Activated T-helper 2 cell treated with anti-CD3 and anti-CD28 coated beads, Interferon-gamma antibody, Interleukin-2, Interleukin-4, amounts not matched to agents 10 μg/mL and 5 μg/mL and 100 μg/mL, durations not matched to agents 14 hours and 24 hours and 36 hours (primary cell): ENCODE measurements at regions of chrX and their contacts with region 1.

Region 1: DNA sequence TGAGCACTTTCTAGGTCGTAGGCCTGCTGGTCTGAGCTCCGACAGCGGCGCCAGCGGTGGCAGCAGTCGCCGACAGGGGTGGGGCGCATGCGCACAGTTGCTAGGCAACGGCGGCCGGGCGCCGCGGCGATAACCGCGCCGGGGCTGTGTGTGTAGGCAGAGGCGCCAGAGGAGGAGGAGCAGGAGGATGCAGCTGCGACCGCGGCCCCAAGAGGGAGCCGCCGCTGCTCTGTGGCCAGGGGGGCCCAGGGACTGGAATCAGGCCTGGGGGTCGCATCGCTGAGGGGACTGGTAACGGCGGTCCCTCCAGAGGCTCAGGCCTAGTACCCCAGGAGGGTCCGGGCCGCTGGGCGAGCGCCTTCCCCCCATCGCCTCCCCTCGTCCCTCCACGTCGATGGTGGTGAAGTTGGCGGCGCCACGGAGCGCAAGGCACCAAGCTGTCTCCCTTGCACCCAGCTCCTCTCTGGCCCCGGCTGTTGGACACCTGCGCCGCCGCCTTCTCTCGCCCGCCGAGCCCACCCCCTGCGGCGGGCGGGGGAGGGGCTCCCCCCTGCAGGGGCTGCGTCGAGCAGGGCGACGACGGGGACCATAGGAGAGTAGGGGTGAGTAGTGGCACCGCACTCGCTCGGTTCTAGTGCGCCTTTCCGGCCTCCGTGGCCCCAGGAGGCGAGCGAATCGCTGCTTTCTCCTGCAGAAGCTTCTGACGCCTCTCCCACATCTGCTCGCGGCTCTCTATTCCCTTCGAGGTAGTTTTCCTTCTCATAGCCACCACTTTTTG is 58.6 kb upstream of the ZC4H2 start:
- DNase-seq: peak; percentile 77
- H3K4me3 Mint-ChIP-seq: peak within 1 kb of the TSS; percentile 91
- H3K27ac Mint-ChIP-seq: peak within 1 kb of the TSS; percentile 85
- H3K4me1 Mint-ChIP-seq: peaks cover 15% of the 10 kb centered on the region
- H3K27me3 Mint-ChIP-seq: no peaks in the 10 kb centered on the region

Region 2: GRCh38 chrX:63350941-63351616 is 1683.8 kb before region 1 on chrX and contains the start of gene SPIN4:
- intact Hi-C with region 1: loop called (anchors 10 kb)
- DNase-seq: peak; percentile 66
- H3K4me3 Mint-ChIP-seq: peak within 1 kb of the TSS; percentile 92
- H3K27ac Mint-ChIP-seq: peak within 1 kb of the TSS; percentile 85
- H3K4me1 Mint-ChIP-seq: peaks cover 30% of the 10 kb centered on the region
- H3K27me3 Mint-ChIP-seq: no peaks in the 10 kb centered on the region
- total RNA-seq, gene SPIN4: 7.5 and 8.2 TPM in 2 replicates

Region 3: DNA sequence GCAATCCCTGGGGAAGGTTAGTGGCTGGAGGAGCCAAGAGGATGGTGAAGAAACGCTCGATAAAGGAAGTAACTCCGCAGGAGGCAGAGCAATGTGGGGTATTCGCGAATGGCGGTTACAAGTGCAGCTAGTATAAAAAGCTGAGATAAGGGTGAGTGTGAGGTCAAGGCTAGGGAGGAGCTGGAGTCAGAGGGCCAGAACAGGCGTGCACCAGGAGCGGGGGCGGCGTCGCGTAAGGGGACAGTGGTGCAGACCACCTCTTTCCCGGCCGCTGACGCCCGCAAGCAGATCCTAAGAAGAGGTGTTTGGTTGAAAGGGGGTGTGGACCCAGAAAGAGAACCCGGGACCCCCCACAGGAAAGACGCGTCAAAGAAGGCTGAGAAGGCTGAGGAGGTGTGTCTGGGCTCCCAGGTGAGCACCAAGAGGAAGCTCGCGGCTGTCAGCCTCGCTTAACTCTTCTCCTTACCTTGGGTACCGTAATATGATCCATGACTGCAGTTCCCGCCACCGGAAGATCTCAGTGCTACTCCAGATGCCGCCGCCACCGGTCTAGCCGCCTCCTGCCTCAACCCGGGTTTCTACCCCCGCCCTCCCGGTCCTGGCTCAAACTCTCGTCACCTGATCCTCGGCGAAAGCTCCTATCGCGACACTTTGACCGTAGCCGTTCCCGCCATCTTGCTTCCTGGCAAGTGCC is 639.8 kb before region 1 on chrX and contains the start of gene MTMR8:
- intact Hi-C with region 1: loop called (anchors 10 kb)
- DNase-seq: peak; percentile 70
- H3K4me3 Mint-ChIP-seq: peak within 1 kb of the TSS; percentile 92
- H3K27ac Mint-ChIP-seq: peak within 1 kb of the TSS; percentile 74
- H3K4me1 Mint-ChIP-seq: peaks cover 8% of the 10 kb centered on the region
- H3K27me3 Mint-ChIP-seq: no peaks in the 10 kb centered on the region
- total RNA-seq, gene MTMR8: 4.3 and 4.4 TPM in 2 replicates

Region 4: GRCh38 chrX:64975989-64976672 is 58.7 kb before region 1 on chrX and contains the start of gene ZC4H2:
- intact Hi-C with region 1: loop called (anchors 1 kb)
- DNase-seq: peak; percentile 54
- H3K4me3 Mint-ChIP-seq: peak within 1 kb of the TSS; percentile 93
- H3K27ac Mint-ChIP-seq: peak within 1 kb of the TSS; percentile 61
- H3K4me1 Mint-ChIP-seq: peaks cover 20% of the 10 kb centered on the region
- H3K27me3 Mint-ChIP-seq: no peaks in the 10 kb centered on the region
- total RNA-seq, gene ZC4H2: 8.9 and 9.3 TPM in 2 replicates

Region 5: GRCh38 chrX:65196758-65197360 is 162.0 kb after region 1 on chrX:
- intact Hi-C with region 1: no loop called
- DNase-seq: no peak
- H3K4me3 Mint-ChIP-seq: no peak overlapping the region
- H3K27ac Mint-ChIP-seq: no peak overlapping the region
- H3K4me1 Mint-ChIP-seq: no peaks in the 10 kb centered on the region
- H3K27me3 Mint-ChIP-seq: no peaks in the 10 kb centered on the region

Region 6: GRCh38 chrX:65266482-65266881 is 231.6 kb after region 1 on chrX:
- intact Hi-C with region 1: no loop called
- DNase-seq: no peak
- H3K4me3 Mint-ChIP-seq: no peak overlapping the region
- H3K27ac Mint-ChIP-seq: no peak overlapping the region
- H3K4me1 Mint-ChIP-seq: no peaks in the 10 kb centered on the region
- H3K27me3 Mint-ChIP-seq: no peaks in the 10 kb centered on the region

Region 7: DNA sequence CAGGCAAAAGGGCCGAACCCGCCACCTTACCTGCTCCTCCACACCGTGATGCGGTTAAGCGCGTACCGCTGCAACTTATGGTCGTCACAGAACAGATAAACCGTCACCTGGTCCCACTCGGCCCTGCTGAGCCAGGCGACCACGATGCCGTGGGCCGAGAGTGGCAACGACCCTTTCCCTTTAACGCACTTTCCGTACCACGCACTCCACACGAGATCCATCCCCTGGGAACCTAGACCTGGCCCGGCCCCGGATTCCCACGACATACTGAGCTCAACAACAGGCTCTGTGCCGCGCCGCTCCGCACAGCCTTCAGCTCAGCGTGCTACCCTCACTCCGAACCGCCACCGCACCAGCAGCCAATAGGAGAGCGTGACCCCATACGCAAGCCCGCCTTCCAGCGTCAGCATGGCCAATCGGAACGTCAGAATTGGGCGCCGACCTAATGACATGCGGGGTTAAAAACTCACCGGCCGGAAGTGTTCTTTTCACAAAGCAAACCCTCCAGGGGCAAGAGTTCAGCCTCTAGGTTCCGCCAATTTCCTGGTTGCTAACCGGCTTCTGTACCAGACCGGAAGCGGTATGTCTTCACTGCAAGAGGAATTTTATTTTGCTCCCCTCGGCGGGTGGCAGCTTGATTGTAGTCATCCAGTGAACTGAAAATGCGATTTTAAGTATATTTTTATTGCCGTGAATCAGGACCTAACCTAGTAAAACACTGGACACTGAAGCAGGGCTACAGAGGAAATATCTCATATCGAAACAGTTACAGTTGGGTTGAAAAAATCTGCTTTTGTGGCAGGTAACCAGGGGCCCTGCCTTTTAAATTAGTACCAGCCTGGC is 499.8 kb after region 1 on chrX and contains the start of gene LAS1L:
- intact Hi-C with region 1: loop called (anchors 2 kb)
- DNase-seq: peak; percentile 90
- H3K4me3 Mint-ChIP-seq: peak within 1 kb of the TSS; percentile 100
- H3K27ac Mint-ChIP-seq: peak within 1 kb of the TSS; percentile 99
- H3K4me1 Mint-ChIP-seq: peaks cover 11% of the 10 kb centered on the region
- H3K27me3 Mint-ChIP-seq: no peaks in the 10 kb centered on the region
- total RNA-seq, gene LAS1L: 54.0 and 55.9 TPM in 2 replicates

Region 8: DNA sequence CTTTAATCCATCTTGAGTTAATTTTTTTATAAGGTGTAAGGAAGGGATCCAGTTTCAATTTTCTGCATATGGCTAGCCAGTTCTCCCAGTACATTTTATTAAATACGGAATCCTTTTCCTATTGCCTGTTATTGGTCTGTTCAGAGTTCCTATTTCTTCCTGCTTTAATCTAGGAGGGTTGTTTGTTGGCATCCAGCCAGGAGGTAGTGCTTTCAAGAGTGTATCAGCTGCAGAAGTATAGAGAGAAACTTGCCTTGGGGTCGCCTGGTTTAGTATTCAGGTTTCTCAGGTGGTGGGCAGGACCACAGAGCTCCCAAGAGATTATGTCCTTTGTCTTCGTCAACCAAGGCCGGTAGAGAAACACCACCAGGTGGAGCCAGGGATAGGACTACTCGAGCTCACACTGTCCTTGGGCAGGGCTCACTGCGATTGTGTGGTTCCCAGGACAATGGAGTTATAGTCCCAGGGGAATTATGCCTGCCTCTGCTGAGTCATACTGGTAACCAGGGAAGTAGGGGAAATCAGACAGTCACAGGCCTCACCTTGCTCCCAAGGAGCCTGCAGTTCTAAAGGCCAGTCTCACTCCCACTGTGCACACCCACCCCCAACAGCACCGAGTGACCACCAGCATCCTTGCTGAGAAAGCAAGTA is 836.9 kb after region 1 on chrX:
- intact Hi-C with region 1: no loop called
- DNase-seq: no peak
- H3K4me3 Mint-ChIP-seq: no peak overlapping the region
- H3K27ac Mint-ChIP-seq: no peak overlapping the region
- H3K4me1 Mint-ChIP-seq: peaks cover 2% of the 10 kb centered on the region
- H3K27me3 Mint-ChIP-seq: no peaks in the 10 kb centered on the region